ENCODE measurements at regions of chr15 and their contacts with region 1.

Region 1: GRCh38 chr15:68372291-68372811 is 59.6 kb downstream of the ITGA11 start:
- DNase-seq: peak in 1 of 2 experiments; percentile 73
- H3K4me3 ChIP-seq: no peak overlapping the region
- H3K27ac ChIP-seq: no peak overlapping the region
- H3K4me1 ChIP-seq: no peaks in the 10 kb centered on the region
- H3K27me3 ChIP-seq: no peaks in the 10 kb centered on the region
- CTCF ChIP-seq: peak; percentile 58 to 76 (median 58)
- EP300 ChIP-seq: no peak
- POLR2A ChIP-seq: no peak
- RAD21 ChIP-seq: peak; percentile 41 to 62

Region 2: GRCh38 chr15:68383161-68384074 is 11.1 kb after region 1 on chr15:
- CTCF ChIA-PET with region 1: interaction called, 11 read pairs
- POLR2A ChIA-PET with region 1: interaction called, 3 read pairs
- DNase-seq: peak in 1 of 2 experiments; percentile 55
- H3K4me3 ChIP-seq: no peak overlapping the region
- H3K27ac ChIP-seq: no peak overlapping the region
- H3K4me1 ChIP-seq: no peaks in the 10 kb centered on the region
- H3K27me3 ChIP-seq: no peaks in the 10 kb centered on the region
- CTCF ChIP-seq: peak in 2 of 3 experiments; percentile 67 to 79; a peak in 3 of 4 replicates
- EP300 ChIP-seq: no peak
- POLR2A ChIP-seq: no peak
- RAD21 ChIP-seq: peak; percentile 61 to 72